IMR-90 (cell line): ENCODE measurements at regions of chr10 and their contacts with region 1.

Region 1: GRCh38 chr10:33706191-33706590 is 371.7 kb upstream of the NRP1 start:
- DNase-seq: peak; percentile 86
- ATAC-seq: no peak
- H3K4me3 ChIP-seq: no peak overlapping the region
- H3K27ac ChIP-seq: no peak overlapping the region
- H3K4me1 ChIP-seq: peaks cover 3% of the 10 kb centered on the region; the same call in 1 of the 2 replicates
- H3K27me3 ChIP-seq: peaks cover 5% of the 10 kb centered on the region; the same call in 1 of the 2 replicates
- CTCF ChIP-seq: no peak
- POLR2A ChIP-seq: no peak
- RAD21 ChIP-seq: no peak

Region 2: GRCh38 chr10:33434933-33435332 is 271.3 kb before region 1 on chr10:
- CTCF ChIA-PET with region 1: no interaction called
- POLR2A ChIA-PET with region 1: no interaction called
- dilution Hi-C with region 1: no loop called
- in situ Hi-C with region 1: no loop called
- intact Hi-C with region 1: loop called (anchors 1 kb)
- DNase-seq: no peak
- ATAC-seq: no peak
- H3K4me3 ChIP-seq: no peak overlapping the region
- H3K27ac ChIP-seq: no peak overlapping the region
- H3K4me1 ChIP-seq: no peaks in the 10 kb centered on the region
- H3K27me3 ChIP-seq: no peaks in the 10 kb centered on the region; the same call in none of the 2 replicates
- CTCF ChIP-seq: no peak
- POLR2A ChIP-seq: no peak
- RAD21 ChIP-seq: no peak